GM10248 (cell line): ENCODE measurements at regions of chr17 and their contacts with region 1.

Region 1: GRCh38 chr17:7844292-7845154 is 10.3 kb upstream of the TMEM88 start:
- DNase-seq: peak; percentile 92
- CTCF ChIP-seq: no peak

Region 2: GRCh38 chr17:7856883-7857723 is 12.6 kb after region 1 on chr17 and contains the start of gene NAA38:
- CTCF ChIA-PET with region 1: interaction called, 8 read pairs
- POLR2A ChIA-PET with region 1: interaction called, 14 read pairs
- DNase-seq: peak; percentile 93
- CTCF ChIP-seq: peak; percentile 72